ENCODE measurements at regions of chr7 and their contacts with region 1.

Region 1: DNA sequence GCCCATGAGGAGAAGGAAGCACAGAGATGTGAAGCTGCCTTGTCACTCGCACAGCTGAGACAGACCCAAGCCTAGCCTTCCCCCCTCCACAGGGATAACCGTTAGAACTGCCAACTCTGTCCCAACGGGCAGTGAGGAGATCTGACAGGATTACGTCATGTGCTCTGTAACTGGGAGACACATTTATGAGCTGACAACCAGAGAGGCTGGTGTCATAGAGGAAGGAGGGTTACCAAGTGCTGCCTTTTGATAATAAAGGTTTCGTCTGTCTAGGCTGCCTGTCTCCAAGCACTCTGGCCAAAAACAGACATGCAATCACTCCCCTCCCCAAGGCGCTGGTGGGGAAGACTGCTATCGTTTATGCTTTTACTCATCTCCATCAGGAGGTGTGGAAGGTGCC is 165.9 kb downstream of the PLXNA4 start:
- DNase-seq: no peak
- ATAC-seq: peak; percentile 54
- H3K4me3 ChIP-seq: no peak overlapping the region
- H3K27ac ChIP-seq: no peak overlapping the region
- H3K4me1 ChIP-seq: no peaks in the 10 kb centered on the region
- H3K27me3 ChIP-seq: no peaks in the 10 kb centered on the region

Region 2: DNA sequence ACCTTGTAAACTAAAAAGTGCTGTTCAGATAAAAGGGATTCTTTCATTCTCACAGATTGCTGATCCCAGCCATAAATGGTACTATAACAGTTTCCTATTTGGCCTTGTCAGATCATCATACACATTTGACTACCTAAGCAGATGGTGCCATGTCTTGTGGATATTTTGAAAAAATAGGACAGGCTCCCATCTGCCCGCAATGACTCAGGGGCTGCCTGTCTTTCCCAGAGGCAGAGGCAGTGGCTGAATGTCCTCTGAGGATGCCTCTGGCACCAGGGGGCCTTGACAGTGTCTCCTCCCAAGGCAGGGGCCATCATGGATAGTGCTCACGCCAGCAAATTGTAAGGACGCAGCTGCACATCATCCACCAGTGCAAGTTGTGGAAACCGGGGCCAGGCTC is 531.0 kb before region 1 on chr7:
- intact Hi-C with region 1: no loop called
- DNase-seq: no peak
- ATAC-seq: no peak
- H3K4me3 ChIP-seq: no peak overlapping the region
- H3K27ac ChIP-seq: no peak overlapping the region
- H3K4me1 ChIP-seq: no peaks in the 10 kb centered on the region
- H3K27me3 ChIP-seq: no peaks in the 10 kb centered on the region

Region 3: GRCh38 chr7:132500727-132501440 is 90.5 kb after region 1 on chr7:
- intact Hi-C with region 1: loop called in 1 of 2 experiments (anchors 5 kb)
- DNase-seq: peak; percentile 86
- ATAC-seq: peak; percentile 81
- H3K4me3 ChIP-seq: no peak overlapping the region
- H3K27ac ChIP-seq: no peak overlapping the region
- H3K4me1 ChIP-seq: no peaks in the 10 kb centered on the region
- H3K27me3 ChIP-seq: no peaks in the 10 kb centered on the region